ENCODE measurements at regions of chr1 and their contacts with region 1.

Region 1: DNA sequence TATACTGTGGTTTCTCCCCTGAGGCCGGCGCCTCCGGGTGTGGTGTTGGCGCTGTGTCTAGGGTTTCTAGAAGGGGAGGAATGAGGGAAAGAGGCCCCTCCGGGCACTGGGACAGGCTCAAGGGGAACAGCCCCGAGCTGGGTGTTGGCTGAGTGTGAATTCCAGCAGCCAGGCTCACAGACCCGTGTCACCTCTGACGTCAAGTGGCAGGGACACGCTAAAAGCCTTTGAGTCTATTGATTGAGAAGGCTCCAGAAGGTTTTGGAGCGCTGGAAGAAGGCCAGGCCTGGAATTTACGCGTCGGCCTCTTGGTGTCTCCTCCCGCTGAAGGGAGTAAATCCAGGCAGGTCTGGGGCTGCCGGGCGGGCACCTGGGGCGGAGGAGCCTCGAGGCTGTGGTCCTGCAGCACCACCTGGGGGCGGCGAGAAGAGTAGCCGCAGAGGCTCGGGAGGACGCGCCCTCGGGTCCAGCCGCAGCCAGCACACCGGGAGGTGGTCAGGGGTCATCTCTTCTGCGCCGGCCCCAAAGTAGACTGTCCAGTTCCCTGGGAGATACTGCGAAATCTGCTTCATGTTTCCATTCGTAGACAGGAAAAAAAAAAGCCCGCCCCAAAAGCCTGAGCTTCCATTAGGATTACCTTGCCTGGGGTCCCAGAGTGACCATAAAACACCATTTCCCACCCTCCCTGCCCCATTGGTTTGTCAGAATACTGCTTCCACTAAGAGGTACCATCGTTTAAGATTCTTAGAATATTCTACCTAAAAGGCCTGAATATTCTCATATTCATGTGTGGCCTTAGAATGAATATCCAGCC is 61.7 kb downstream of the TLR5 start:
- DNase-seq: peak; percentile 89
- ATAC-seq: peak; percentile 94 to 97
- H3K4me3 ChIP-seq: peak overlapping the region; percentile 42
- H3K27ac ChIP-seq: peak overlapping the region; percentile 70
- H3K4me1 ChIP-seq: peaks cover 22% of the 10 kb centered on the region
- H3K27me3 ChIP-seq: no peaks in the 10 kb centered on the region
- CTCF ChIP-seq: peak; percentile 95

Region 2: DNA sequence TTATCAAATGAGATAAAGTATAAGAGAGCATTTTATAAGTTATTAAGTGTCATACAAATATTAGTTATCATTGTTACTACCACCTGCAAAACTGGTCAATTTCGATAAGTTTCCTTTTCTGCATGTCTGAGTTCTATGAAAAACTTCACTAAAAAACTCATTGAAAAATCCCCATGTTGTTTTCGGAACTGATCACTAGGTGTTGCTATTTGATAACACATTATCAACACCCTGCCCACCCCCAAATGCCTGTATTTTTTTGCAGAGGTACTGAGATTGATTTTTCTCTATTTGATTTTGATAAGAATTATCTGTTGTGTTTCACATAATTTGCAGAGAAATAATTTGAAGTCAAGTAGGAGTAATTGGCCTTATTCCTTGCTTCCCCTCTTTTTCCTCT is 288.6 kb before region 1 on chr1:
- intact Hi-C with region 1: loop called (anchors 10 kb)
- DNase-seq: no peak
- ATAC-seq: peak in 1 of 2 donors; percentile 57
- H3K4me3 ChIP-seq: no peak overlapping the region
- H3K27ac ChIP-seq: no peak overlapping the region
- H3K4me1 ChIP-seq: no peaks in the 10 kb centered on the region
- H3K27me3 ChIP-seq: no peaks in the 10 kb centered on the region
- CTCF ChIP-seq: peak; percentile 57

Measured in lower lobe of right lung (tissue), 2 donors.